Activated CD4-positive, alpha-beta memory T cell treated with anti-CD3 and anti-CD28 coated beads for 36 hours (primary cell): ENCODE measurements at regions of chr7 and their contacts with region 1.

Region 1: DNA sequence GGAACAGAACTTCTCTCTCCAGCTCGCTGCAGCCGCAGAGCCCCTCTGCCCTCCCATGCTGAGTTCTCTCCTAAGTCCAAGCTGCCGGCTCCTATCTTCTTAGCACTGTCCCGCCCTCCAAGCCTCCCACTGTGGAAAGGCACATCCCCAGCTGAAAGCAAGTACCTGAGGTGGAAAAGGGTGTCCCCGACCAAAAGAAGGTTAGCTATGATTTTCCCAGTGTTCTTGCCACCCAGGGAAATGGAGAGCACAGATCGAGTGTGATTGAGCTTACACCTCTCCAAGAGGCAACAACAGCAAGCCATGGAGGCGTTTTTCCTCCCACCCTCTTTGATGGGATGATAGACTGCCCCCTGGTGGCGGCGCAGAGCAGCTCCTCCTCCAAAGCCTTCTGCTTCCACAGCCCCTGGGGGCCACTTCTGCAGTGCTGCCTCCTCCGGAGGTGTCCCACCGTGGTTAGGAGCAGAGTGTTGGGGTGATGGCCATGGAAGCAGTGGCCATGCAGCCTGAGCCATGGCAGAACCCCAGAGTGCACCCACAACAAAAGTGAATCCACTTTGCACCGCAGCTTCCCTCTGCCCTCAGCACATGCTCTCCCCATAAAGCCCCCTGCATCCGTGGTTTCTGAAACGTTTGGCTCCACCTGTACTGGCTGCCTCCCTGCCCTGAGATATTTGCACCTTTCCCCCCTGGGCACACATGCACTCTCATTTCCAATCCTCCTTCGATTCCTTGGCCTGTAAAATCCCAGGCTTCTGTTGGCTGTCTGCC is 143.1 kb upstream of the STK17A start:
- DNase-seq: peak; percentile 72
- H3K4me3 Mint-ChIP-seq: no peak overlapping the region
- H3K27ac Mint-ChIP-seq: no peak overlapping the region
- H3K4me1 Mint-ChIP-seq: no peaks in the 10 kb centered on the region
- H3K27me3 Mint-ChIP-seq: peaks cover 8% of the 10 kb centered on the region

Region 2: GRCh38 chr7:42940985-42941847 is 498.6 kb before region 1 on chr7:
- CTCF ChIA-PET with region 1: interaction called, 9 read pairs
- POLR2A ChIA-PET with region 1: no interaction called
- intact Hi-C with region 1: loop called (anchors 1 kb)
- DNase-seq: peak; percentile 84
- H3K4me3 Mint-ChIP-seq: no peak overlapping the region
- H3K27ac Mint-ChIP-seq: no peak overlapping the region
- H3K4me1 Mint-ChIP-seq: peaks cover 39% of the 10 kb centered on the region
- H3K27me3 Mint-ChIP-seq: no peaks in the 10 kb centered on the region

Region 3: GRCh38 chr7:43260980-43261878 is 178.6 kb before region 1 on chr7:
- CTCF ChIA-PET with region 1: interaction called, 15 read pairs
- POLR2A ChIA-PET with region 1: no interaction called
- intact Hi-C with region 1: no loop called
- DNase-seq: peak; percentile 76
- H3K4me3 Mint-ChIP-seq: no peak overlapping the region
- H3K27ac Mint-ChIP-seq: no peak overlapping the region
- H3K4me1 Mint-ChIP-seq: no peaks in the 10 kb centered on the region
- H3K27me3 Mint-ChIP-seq: peaks cover 11% of the 10 kb centered on the region

Region 4: GRCh38 chr7:43341132-43341531 is 98.7 kb before region 1 on chr7:
- CTCF ChIA-PET with region 1: no interaction called
- POLR2A ChIA-PET with region 1: no interaction called
- intact Hi-C with region 1: loop called (anchors 10 kb)
- DNase-seq: no peak
- H3K4me3 Mint-ChIP-seq: no peak overlapping the region
- H3K27ac Mint-ChIP-seq: no peak overlapping the region
- H3K4me1 Mint-ChIP-seq: no peaks in the 10 kb centered on the region
- H3K27me3 Mint-ChIP-seq: peaks cover 18% of the 10 kb centered on the region

Region 5: DNA sequence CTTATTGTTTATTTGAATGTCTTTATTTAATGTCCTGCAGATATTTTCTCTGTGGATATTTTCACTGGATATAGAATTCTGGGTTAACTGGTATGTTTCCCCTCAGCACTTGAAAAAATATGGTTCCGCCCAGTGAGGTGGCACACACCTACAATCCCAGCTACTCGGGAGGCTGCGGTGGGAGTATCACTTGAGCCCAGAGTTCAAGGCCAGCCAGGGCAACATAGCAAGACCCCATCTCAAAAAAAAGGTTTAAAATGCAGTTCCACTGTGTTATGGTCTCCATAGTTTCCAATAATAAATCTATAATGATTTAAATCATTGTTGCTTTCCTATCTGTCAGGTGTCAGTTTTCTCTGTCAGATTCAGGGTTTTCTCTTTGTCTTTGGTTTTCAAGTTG is 22.4 kb before region 1 on chr7:
- CTCF ChIA-PET with region 1: interaction called, 11 read pairs
- POLR2A ChIA-PET with region 1: no interaction called
- intact Hi-C with region 1: no loop called
- DNase-seq: no peak
- H3K4me3 Mint-ChIP-seq: no peak overlapping the region
- H3K27ac Mint-ChIP-seq: no peak overlapping the region
- H3K4me1 Mint-ChIP-seq: no peaks in the 10 kb centered on the region
- H3K27me3 Mint-ChIP-seq: peaks cover 9% of the 10 kb centered on the region